Posterior vena cava (tissue), 2 donors: ENCODE measurements at regions of chr12 and their contacts with region 1.

Region 1: DNA sequence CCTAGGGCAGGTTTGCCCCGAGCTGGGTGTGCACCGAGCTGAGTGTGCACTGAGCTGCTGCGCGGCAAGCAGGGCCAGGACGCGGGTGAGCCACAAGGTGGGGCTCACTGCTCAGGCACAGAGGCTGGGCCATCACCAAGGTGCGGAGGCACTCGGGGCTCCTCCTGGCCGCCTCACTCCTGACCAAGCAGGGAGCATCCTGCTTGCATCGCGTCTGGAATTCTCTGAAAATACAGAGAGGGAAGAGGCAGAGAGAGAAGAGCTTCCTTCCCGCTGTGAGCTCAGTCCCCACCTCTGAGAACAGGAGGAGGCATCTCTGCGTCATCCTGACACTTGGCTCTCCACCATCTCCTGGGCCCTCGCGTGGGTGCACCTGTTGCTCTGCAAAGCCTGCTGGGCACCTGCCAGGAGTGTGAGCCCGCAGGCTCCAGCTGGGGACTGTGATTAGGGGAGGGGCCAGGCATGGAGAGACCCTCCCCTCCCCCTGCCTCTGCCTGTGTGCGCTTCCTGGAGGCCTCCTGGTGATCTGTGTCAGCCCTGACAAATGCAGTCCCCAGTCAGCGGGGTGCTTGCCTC is 116.3 kb downstream of the GLT1D1 start:
- DNase-seq: no peak

Region 2: DNA sequence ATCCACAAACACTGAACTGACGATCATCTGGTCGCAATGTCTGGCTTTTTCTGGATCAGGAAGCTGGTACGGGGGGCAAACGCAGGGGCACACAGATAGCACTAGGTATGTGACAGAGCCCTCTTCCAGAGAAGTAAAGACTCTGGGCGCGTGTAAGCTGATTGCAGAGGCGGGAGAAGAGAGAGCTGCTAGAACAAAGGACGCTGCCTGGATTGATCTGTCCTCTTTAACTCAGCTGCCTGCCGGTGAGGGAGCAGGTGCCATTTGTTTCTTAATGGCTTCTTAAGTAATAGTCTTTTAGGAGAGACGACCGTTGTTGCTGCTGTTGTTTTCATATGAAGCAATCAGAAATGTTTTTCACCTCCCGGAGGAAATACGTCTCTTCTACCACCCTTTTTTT is 39.0 kb before region 1 on chr12:
- intact Hi-C with region 1: no loop called
- DNase-seq: no peak

Region 3: DNA sequence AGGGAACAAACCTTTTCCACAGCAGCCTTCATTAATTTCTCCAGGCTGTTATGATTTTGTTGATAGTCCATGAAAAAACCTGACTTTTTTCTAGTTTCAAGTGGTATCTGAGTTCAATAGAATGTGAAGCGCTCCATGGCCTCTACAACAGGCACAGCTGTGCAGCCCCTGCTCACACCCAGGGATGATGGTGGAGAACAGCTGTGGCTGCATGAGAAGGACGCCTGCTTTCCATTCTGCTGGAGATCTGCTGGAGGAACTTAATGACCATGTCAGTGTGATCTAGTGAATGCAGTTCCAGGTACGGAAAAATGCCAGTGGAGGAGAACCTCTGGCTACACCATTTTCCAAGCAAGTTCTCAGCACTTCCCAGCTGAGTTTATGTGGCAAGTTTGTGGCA is 1448.7 kb after region 1 on chr12:
- intact Hi-C with region 1: loop called in 1 of 2 experiments (anchors 10 kb)
- DNase-seq: no peak